CD4-positive, alpha-beta memory T cell (primary cell): ENCODE measurements at regions of chr15 and their contacts with region 1.

Region 1: GRCh38 chr15:49155110-49155833 is at the start of gene COPS2:
- DNase-seq: peak; percentile 93 to 97 (median 95)
- H3K4me3 ChIP-seq: peak within 1 kb of the TSS; percentile 74 to 88
- H3K4me3 Mint-ChIP-seq: peak within 1 kb of the TSS; percentile 97 to 100 (median 100)
- H3K27ac ChIP-seq: peak within 1 kb of the TSS; percentile 94
- H3K27ac Mint-ChIP-seq: peak within 1 kb of the TSS; percentile 97 to 100 (median 99)
- H3K4me1 ChIP-seq: peaks cover 52% of the 10 kb centered on the region
- H3K4me1 Mint-ChIP-seq: peaks cover 33 to 61% (median 49%) of the 10 kb centered on the region in 4 donors
- H3K27me3 ChIP-seq: no peaks in the 10 kb centered on the region
- H3K27me3 Mint-ChIP-seq: no peaks in the 10 kb centered on the region
- total RNA-seq, gene COPS2: 55.5 to 56.9 TPM

Region 2: GRCh38 chr15:48330855-48331795 is 824.1 kb before region 1 on chr15 and contains the start of gene DUT:
- CTCF ChIA-PET with region 1: no interaction called
- POLR2A ChIA-PET with region 1: interaction called, 13 read pairs
- intact Hi-C with region 1: loop called (anchors 10 kb)
- DNase-seq: peak; percentile 83 to 87 (median 85)
- H3K4me3 ChIP-seq: peak within 1 kb of the TSS; percentile 55 to 84
- H3K4me3 Mint-ChIP-seq: peak within 1 kb of the TSS; percentile 96 to 100 (median 100)
- H3K27ac ChIP-seq: peak within 1 kb of the TSS; percentile 89
- H3K27ac Mint-ChIP-seq: peak within 1 kb of the TSS; percentile 98 to 100 (median 99)
- H3K4me1 ChIP-seq: peaks cover 21% of the 10 kb centered on the region
- H3K4me1 Mint-ChIP-seq: peaks cover 16 to 35% (median 27%) of the 10 kb centered on the region in 4 donors
- H3K27me3 ChIP-seq: no peaks in the 10 kb centered on the region
- H3K27me3 Mint-ChIP-seq: no peaks in the 10 kb centered on the region
- total RNA-seq, gene DUT: 127 to 131 TPM

Region 3: DNA sequence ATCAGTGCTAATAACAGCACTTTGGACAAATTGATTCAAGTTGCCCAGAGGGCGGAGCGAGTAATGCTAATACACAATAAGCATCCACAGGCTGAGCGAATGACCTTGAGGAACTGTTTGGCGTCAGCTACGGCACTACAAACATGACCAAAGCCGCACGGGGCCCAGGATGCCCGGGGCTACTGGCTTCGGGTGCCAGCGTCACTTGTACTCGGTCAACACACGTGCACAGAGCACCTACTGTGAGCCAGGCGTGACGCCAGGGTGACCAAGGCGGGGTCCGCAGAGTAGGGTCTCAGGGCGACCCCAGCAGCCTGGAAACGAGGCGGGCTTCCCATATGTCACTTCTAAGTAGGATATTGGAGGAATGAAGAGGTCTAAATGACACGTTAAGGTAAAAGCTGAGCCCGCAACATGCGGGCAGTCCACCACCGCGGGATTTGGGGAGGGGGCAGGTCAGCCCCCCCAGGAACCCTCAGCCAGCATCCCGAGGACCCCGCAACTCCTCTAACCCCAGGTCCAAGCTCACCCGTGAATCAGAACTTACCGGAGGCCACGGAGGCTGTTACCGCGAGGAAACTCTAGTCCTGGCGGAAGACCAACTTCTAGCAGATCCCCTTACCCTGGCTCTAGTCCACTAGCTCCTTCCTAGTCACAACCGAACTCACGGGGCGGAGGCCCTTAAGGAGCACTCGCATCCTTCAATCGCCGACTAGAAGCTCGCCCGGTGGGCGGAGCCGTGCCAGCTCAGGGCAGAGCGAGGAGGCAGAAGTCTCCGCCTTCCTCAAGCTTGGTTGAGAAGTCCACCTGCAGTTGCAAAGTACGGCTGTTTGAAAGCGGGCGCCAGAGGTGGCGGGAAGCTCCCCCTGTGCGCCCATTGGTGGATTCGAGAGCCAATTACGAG is 344.6 kb before region 1 on chr15 and contains the start of gene CEP152:
- CTCF ChIA-PET with region 1: interaction called, 6 read pairs
- POLR2A ChIA-PET with region 1: interaction called, 9 read pairs
- intact Hi-C with region 1: loop called (anchors 1 kb)
- DNase-seq: peak; percentile 97 to 99 (median 98)
- H3K4me3 ChIP-seq: peak within 1 kb of the TSS; percentile 91 to 99
- H3K4me3 Mint-ChIP-seq: peak within 1 kb of the TSS; percentile 80 to 95 (median 94)
- H3K27ac ChIP-seq: peak within 1 kb of the TSS; percentile 67
- H3K27ac Mint-ChIP-seq: peak within 1 kb of the TSS; percentile 82 to 95 (median 88)
- H3K4me1 ChIP-seq: peaks cover 16% of the 10 kb centered on the region
- H3K4me1 Mint-ChIP-seq: peaks cover 19 to 38% (median 24%) of the 10 kb centered on the region in 4 donors
- H3K27me3 ChIP-seq: no peaks in the 10 kb centered on the region
- H3K27me3 Mint-ChIP-seq: peaks cover 0 to 5% of the 10 kb centered on the region in 2 donors
- total RNA-seq, gene CEP152: 14.4 to 15.3 TPM

Region 4: DNA sequence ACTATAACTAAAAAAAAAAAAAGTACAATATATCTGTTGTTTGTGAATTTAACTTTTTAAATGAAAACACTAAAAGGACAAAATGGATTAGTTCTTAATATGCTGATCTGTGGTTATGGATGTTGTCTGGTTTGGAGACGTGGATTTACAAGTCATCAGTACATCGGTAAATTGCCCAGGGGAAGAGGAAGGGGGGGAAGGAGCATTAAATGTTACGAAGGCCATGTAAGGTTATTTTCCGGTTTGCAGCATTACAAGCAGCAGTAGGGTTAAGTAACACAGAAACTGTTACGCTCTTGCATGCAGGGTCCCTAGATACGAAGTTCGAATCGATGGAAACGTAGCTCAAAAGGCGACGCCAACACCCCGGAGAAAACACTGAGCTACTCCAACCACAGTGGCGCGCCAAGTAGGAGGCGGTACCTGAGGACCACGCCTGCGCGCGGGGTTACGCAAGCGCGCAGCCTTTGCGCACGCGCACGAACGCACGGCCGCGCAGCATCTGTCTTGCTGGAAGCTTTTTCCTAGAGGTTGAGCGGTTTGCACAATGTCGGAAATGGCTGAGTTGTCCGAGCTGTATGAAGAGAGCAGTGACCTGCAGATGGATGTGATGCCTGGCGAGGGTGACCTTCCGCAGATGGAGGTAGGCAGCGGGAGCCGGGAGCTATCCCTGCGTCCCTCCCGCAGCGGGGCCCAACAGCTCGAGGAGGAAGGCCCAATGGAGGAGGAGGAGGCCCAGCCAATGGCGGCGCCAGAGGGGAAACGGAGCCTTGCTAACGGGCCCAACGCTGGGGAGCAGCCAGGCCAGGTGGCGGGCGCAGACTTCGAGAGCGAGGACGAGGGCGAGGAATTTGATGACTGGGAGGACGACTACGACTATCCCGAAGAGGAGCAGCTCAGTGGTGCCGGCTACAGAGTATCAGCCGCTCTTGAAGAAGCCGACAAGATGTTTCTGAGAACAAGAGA is 277.4 kb before region 1 on chr15 and contains the start of gene EID1:
- CTCF ChIA-PET with region 1: interaction called, 4 read pairs
- POLR2A ChIA-PET with region 1: interaction called, 25 read pairs
- intact Hi-C with region 1: loop called (anchors 1 kb)
- DNase-seq: peak; percentile 93 to 95 (median 94)
- H3K4me3 ChIP-seq: peak within 1 kb of the TSS; percentile 74 to 96
- H3K4me3 Mint-ChIP-seq: peak within 1 kb of the TSS; percentile 96 to 100 (median 98)
- H3K27ac ChIP-seq: peak within 1 kb of the TSS; percentile 71
- H3K27ac Mint-ChIP-seq: peak within 1 kb of the TSS; percentile 97 to 100 (median 99)
- H3K4me1 ChIP-seq: peaks cover 26% of the 10 kb centered on the region
- H3K4me1 Mint-ChIP-seq: peaks cover 18 to 31% (median 24%) of the 10 kb centered on the region in 4 donors
- H3K27me3 ChIP-seq: no peaks in the 10 kb centered on the region
- H3K27me3 Mint-ChIP-seq: peaks cover 3 to 4% of the 10 kb centered on the region in 2 donors
- total RNA-seq, gene EID1: 76.0 to 91.2 TPM

Region 5: GRCh38 chr15:49169880-49170597 is 14.8 kb after region 1 on chr15 and contains the start of gene GALK2:
- CTCF ChIA-PET with region 1: interaction called, 11 read pairs
- POLR2A ChIA-PET with region 1: interaction called, 82 read pairs
- intact Hi-C with region 1: loop called (anchors 1 kb)
- DNase-seq: peak; percentile 83 to 97 (median 85)
- H3K4me3 ChIP-seq: peak within 1 kb of the TSS; percentile 57 to 86
- H3K4me3 Mint-ChIP-seq: peak within 1 kb of the TSS; percentile 94 to 99 (median 98)
- H3K27ac ChIP-seq: peak within 1 kb of the TSS; percentile 80
- H3K27ac Mint-ChIP-seq: peak within 1 kb of the TSS; percentile 90 to 100 (median 98)
- H3K4me1 ChIP-seq: peaks cover 34% of the 10 kb centered on the region
- H3K4me1 Mint-ChIP-seq: peaks cover 26 to 50% (median 38%) of the 10 kb centered on the region in 4 donors
- H3K27me3 ChIP-seq: no peaks in the 10 kb centered on the region
- H3K27me3 Mint-ChIP-seq: no peaks in the 10 kb centered on the region
- total RNA-seq, gene GALK2: 30.7 to 31.5 TPM

Region 6: GRCh38 chr15:49620658-49621368 is 465.5 kb after region 1 on chr15 and contains the starts of genes DTWD1 and FAM227B:
- CTCF ChIA-PET with region 1: no interaction called
- POLR2A ChIA-PET with region 1: interaction called, 21 read pairs
- intact Hi-C with region 1: loop called (anchors 1 kb)
- DNase-seq: peak; percentile 92 to 96 (median 93)
- H3K4me3 ChIP-seq: peak within 1 kb of the TSS; percentile 80 to 92
- H3K4me3 Mint-ChIP-seq: peak within 1 kb of the TSS; percentile 95 to 99 (median 98)
- H3K27ac ChIP-seq: peak within 1 kb of the TSS; percentile 71
- H3K27ac Mint-ChIP-seq: peak within 1 kb of the TSS; percentile 98 to 99 (median 99)
- H3K4me1 ChIP-seq: peaks cover 22% of the 10 kb centered on the region
- H3K4me1 Mint-ChIP-seq: peaks cover 25 to 51% (median 37%) of the 10 kb centered on the region in 4 donors
- H3K27me3 ChIP-seq: no peaks in the 10 kb centered on the region
- H3K27me3 Mint-ChIP-seq: no peaks in the 10 kb centered on the region
- total RNA-seq, gene DTWD1: 28.7 to 29.9 TPM
- total RNA-seq, gene FAM227B: 11.5 to 13.6 TPM

Region 7: GRCh38 chr15:50424066-50424890 is 1269.0 kb after region 1 on chr15 and contains the start of gene USP8:
- CTCF ChIA-PET with region 1: no interaction called
- POLR2A ChIA-PET with region 1: interaction called, 6 read pairs
- intact Hi-C with region 1: loop called (anchors 5 kb)
- DNase-seq: peak; percentile 90 to 93 (median 92)
- H3K4me3 ChIP-seq: peak within 1 kb of the TSS; percentile 99
- H3K4me3 Mint-ChIP-seq: peak within 1 kb of the TSS; percentile 96 to 100 (median 98)
- H3K27ac ChIP-seq: peak within 1 kb of the TSS; percentile 94
- H3K27ac Mint-ChIP-seq: peak within 1 kb of the TSS; percentile 98 to 100 (median 99)
- H3K4me1 ChIP-seq: peaks cover 32% of the 10 kb centered on the region
- H3K4me1 Mint-ChIP-seq: peaks cover 13 to 53% (median 32%) of the 10 kb centered on the region in 4 donors
- H3K27me3 ChIP-seq: no peaks in the 10 kb centered on the region
- H3K27me3 Mint-ChIP-seq: no peaks in the 10 kb centered on the region
- total RNA-seq, gene USP8: 68.9 to 70.9 TPM